OCI-LY7 (cell line): ENCODE measurements at regions of chr14 and their contacts with region 1.

Region 1: DNA sequence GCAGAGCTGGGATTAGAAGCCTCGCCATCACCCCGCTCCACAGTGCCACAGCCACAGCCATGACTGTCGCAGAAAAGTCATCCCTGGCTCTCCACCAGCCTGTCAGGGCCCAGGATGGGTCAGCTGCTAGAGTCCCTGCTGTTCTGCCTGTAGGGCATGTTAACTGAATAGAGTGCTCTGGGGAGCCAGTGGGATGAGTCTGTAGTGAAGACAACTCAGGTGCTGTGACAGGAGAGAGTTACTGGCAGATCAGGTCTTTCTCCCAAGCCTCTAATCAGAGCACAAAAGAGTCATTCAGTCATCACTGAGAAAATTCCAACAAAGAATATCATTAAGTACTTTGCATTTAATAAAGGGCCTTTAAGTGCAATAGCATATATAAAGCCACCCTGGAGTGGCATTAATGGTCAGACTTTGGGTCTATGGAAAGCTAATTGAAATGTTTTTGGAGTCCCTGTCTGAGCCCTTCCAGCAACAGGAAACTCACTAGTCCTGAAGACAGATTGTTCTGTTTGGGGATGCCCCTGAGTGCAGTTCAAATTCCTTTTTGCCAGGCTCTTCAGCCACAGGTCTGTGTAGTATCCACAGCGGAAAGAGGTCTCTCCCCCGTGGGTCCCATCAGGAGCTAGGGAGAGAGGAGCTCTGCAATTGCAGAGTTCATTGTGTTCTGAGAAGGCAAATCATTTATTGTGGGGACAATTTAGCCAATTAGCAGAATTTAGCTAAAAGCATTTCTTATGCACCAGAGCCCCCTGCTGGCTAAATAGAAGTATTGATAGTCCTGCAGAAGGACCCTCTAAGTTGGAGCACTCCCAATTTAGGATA is 45.2 kb upstream of the C14orf132 start:
- DNase-seq: peak; percentile 80
- H3K4me3 ChIP-seq: no peak overlapping the region
- H3K27ac ChIP-seq: no peak overlapping the region
- H3K4me1 ChIP-seq: no peaks in the 10 kb centered on the region
- CTCF ChIP-seq: peak; percentile 97

Region 2: GRCh38 chr14:95561001-95561412 is 433.0 kb before region 1 on chr14:
- CTCF ChIA-PET with region 1: interaction called, 6 read pairs
- POLR2A ChIA-PET with region 1: interaction called, 3 read pairs
- intact Hi-C with region 1: loop called (anchors 1 kb)
- DNase-seq: peak; percentile 92
- H3K4me3 ChIP-seq: no peak overlapping the region
- H3K27ac ChIP-seq: no peak overlapping the region
- H3K4me1 ChIP-seq: peaks cover 6% of the 10 kb centered on the region
- CTCF ChIP-seq: peak; percentile 100

Region 3: GRCh38 chr14:95683793-95684192 is 310.2 kb before region 1 on chr14:
- CTCF ChIA-PET with region 1: no interaction called
- POLR2A ChIA-PET with region 1: no interaction called
- intact Hi-C with region 1: loop called (anchors 5 kb)
- DNase-seq: peak; percentile 69
- H3K4me3 ChIP-seq: no peak overlapping the region
- H3K27ac ChIP-seq: no peak overlapping the region
- H3K4me1 ChIP-seq: peaks cover 72% of the 10 kb centered on the region
- CTCF ChIP-seq: peak; percentile 98

Region 4: GRCh38 chr14:96100161-96101029 is 106.4 kb after region 1 on chr14:
- CTCF ChIA-PET with region 1: no interaction called
- POLR2A ChIA-PET with region 1: no interaction called
- intact Hi-C with region 1: loop called (anchors 2 kb)
- DNase-seq: peak; percentile 62
- H3K4me3 ChIP-seq: no peak overlapping the region
- H3K27ac ChIP-seq: no peak overlapping the region
- H3K4me1 ChIP-seq: no peaks in the 10 kb centered on the region
- CTCF ChIP-seq: peak; percentile 96